ENCODE measurements at regions of chr1 and their contacts with region 1.

Region 1: DNA sequence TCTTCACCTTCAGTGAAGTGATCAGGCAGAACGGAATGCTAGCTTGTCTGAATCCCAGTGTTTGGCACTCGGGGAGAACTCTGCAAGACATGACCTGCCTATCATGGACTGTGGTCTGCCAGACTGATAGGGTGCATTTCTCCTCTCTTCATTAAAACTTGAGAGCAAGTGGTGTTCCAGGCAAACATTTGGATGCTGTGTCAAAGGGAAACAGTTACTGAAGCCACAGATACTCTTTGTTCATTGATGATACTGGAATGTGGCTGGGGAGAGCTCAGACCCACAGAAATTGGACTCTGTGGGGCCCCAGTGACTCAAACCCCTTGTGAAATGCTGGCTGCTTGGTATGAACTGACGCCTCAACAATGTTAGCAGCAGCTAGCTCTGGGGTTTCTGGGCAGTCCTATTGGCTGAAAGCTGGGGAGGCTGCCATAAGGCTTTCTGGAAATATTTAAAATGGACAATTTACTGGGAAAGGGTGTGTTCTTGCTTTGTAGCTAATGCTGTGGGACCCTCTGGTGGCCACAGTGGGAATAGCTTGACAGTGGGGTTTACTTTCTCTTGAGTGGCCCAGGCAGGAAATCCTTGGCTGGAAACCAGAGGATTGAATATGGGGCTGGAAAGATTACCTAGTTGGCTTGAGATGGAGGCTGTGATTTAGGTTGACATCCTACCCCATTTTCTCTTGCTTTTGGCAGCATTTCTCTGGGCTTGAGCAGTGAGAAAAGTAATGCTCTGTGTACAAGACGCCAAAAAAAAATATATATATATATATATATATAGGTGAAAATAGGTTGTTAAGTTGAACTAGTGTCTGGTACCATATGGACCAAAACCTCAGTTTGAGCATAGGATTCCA is 8.0 kb upstream of the S100A10 start:
- DNase-seq: peak; percentile 73 to 90 (median 84)
- ATAC-seq: peak; percentile 78 to 91 (median 86)
- H3K4me3 ChIP-seq: no peak overlapping the region
- H3K27ac ChIP-seq: no peak overlapping the region
- H3K4me1 ChIP-seq: peaks cover 0 to 2% (median 0%) of the 10 kb centered on the region in 3 donors
- H3K27me3 ChIP-seq: peaks cover 0 to 4% (median 0%) of the 10 kb centered on the region in 4 donors
- CTCF ChIP-seq: peak; percentile 79 to 89 (median 84)

Region 2: DNA sequence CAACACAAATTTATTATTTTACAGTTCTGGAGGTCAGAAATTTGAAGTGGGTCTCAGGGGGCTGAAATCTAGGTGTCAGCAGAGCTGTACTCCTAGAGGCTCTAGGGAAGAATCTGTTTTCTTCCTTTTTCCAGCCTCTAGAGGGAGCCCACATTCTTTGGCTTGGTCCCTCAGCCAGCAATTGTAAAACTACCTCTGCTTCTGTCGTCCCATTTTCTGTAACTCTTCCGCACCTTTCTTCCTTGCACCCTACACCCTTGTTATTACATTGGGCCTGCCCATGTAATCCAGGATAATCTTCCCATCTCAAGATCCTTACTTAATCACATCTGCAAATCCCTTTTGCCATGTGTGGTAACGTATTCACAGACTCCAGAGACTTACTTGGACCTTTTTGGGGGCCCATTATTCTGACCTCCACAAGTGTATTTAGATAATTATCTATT is 67.5 kb before region 1 on chr1:
- intact Hi-C with region 1: loop called in 2 of 3 experiments (anchors 2 to 5 kb)
- DNase-seq: peak in 1 of 6 donors; percentile 54
- ATAC-seq: peak; percentile 82 to 97 (median 94)
- H3K4me3 ChIP-seq: no peak overlapping the region
- H3K27ac ChIP-seq: no peak overlapping the region
- H3K4me1 ChIP-seq: peaks cover 0 to 6% (median 5%) of the 10 kb centered on the region in 3 donors
- H3K27me3 ChIP-seq: peaks cover 0 to 2% (median 0%) of the 10 kb centered on the region in 4 donors
- CTCF ChIP-seq: peak; percentile 41 to 82 (median 74)

Region 3: DNA sequence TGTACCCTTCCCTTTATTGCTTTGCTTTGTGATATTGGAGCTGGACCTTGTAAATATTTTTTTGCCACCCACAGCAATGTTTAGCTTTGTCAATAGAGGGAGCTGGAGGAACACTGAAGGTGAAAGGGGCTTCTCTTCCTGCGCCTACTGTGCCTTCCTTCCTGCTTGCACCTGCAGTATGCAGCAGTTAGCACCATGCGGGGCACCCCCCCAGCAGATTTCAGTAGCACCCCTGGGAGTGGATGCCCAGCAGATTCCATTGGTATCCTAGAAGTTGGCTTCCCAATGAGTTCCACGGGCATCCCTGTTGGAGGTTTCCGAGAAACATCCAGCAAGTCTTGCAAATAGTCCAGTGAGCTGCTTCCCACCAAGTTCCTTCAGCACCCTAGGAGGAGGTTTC is 33.6 kb before region 1 on chr1:
- intact Hi-C with region 1: loop called in 1 of 3 experiments (anchors 5 kb)
- DNase-seq: peak in 2 of 6 donors; percentile 36 to 38
- ATAC-seq: peak; percentile 58 to 88 (median 81)
- H3K4me3 ChIP-seq: no peak overlapping the region
- H3K27ac ChIP-seq: no peak overlapping the region
- H3K4me1 ChIP-seq: peaks cover 6 to 10% (median 9%) of the 10 kb centered on the region in 3 donors
- H3K27me3 ChIP-seq: no peaks in the 10 kb centered on the region
- CTCF ChIP-seq: peak in 3 of 4 donors; percentile 21 to 60 (median 38)

Region 4: GRCh38 chr1:152089014-152089676 is 87.5 kb after region 1 on chr1 and contains the start of gene TCHHL1:
- intact Hi-C with region 1: no loop called
- DNase-seq: no peak
- ATAC-seq: no peak
- H3K4me3 ChIP-seq: no peak within 1 kb of the TSS
- H3K27ac ChIP-seq: no peak within 1 kb of the TSS
- H3K4me1 ChIP-seq: no peaks in the 10 kb centered on the region
- H3K27me3 ChIP-seq: no peaks in the 10 kb centered on the region
- CTCF ChIP-seq: no peak
- total RNA-seq, gene TCHHL1: not detected

Measured in pancreas (tissue), 10 donors.